ENCODE measurements at regions of chr5 and their contacts with region 1.

Region 1: GRCh38 chr5:123511648-123512605 is at the start of gene CSNK1G3:
- DNase-seq: peak; percentile 94 to 97
- ATAC-seq: peak; percentile 94 to 98
- H3K4me3 ChIP-seq: peak within 1 kb of the TSS; percentile 93
- H3K27ac ChIP-seq: peak within 1 kb of the TSS; percentile 96 to 97
- H3K4me1 ChIP-seq: peaks cover 24% of the 10 kb centered on the region
- CTCF ChIP-seq: no peak
- EP300 ChIP-seq: no peak
- POLR2A ChIP-seq: peak; percentile 92
- RAD21 ChIP-seq: no peak
- polyA plus RNA-seq, gene CSNK1G3: 36.4 and 50.9 TPM in 2 replicates

Region 2: DNA sequence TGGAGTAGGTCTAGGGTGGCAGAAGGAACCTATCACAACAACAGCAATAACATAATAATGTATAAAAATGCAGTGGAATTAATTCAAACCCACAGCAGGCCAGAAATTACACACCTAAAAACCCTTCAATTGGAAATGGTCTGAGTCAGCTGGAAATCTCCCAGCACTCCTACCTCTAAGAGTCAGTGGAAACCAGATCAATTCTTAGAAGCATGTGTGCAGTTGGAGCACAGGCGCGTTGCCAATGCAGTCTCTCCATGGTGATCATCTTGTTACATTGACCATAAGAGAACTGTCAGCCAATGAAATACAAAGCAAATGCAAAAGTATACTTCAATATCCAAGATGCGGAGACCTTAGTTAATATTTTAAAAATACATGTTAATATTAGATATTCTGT is 15.0 kb before region 1 on chr5:
- CTCF ChIA-PET with region 1: interaction called, 5 read pairs
- POLR2A ChIA-PET with region 1: interaction called, 15 read pairs
- DNase-seq: no peak
- ATAC-seq: no peak
- H3K4me3 ChIP-seq: no peak overlapping the region
- H3K27ac ChIP-seq: no peak overlapping the region
- H3K4me1 ChIP-seq: no peaks in the 10 kb centered on the region
- CTCF ChIP-seq: no peak
- EP300 ChIP-seq: no peak
- POLR2A ChIP-seq: no peak
- RAD21 ChIP-seq: no peak

Region 3: DNA sequence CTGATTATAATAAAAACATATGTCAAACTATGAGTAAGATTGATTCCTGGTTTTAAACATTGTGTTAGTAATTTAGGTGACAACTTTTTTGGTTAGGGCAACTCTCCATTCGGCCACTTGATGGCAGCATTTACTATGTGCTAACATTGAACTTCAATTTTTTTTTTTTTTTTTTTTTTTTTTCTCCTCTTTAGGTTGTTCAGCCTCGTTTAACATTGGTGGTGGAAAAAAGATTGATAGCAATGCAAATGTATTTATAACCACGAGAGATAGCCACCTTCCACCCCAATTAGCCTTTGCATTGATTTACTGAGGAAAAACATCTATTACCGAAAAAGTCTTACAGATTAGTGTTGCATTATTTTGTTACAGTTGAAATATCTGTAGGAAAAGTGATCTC is 159.1 kb after region 1 on chr5:
- CTCF ChIA-PET with region 1: no interaction called
- POLR2A ChIA-PET with region 1: no interaction called
- DNase-seq: peak; percentile 8 to 47
- ATAC-seq: peak in 1 of 2 experiments; percentile 46; a peak in 2 of 6 replicates
- H3K4me3 ChIP-seq: no peak overlapping the region
- H3K27ac ChIP-seq: no peak overlapping the region
- H3K4me1 ChIP-seq: no peaks in the 10 kb centered on the region
- CTCF ChIP-seq: peak; percentile 86
- EP300 ChIP-seq: no peak
- POLR2A ChIP-seq: no peak
- RAD21 ChIP-seq: peak; percentile 90 to 92